Calu3 (cell line): ENCODE measurements at regions of chr10 and their contacts with region 1.

Region 1: DNA sequence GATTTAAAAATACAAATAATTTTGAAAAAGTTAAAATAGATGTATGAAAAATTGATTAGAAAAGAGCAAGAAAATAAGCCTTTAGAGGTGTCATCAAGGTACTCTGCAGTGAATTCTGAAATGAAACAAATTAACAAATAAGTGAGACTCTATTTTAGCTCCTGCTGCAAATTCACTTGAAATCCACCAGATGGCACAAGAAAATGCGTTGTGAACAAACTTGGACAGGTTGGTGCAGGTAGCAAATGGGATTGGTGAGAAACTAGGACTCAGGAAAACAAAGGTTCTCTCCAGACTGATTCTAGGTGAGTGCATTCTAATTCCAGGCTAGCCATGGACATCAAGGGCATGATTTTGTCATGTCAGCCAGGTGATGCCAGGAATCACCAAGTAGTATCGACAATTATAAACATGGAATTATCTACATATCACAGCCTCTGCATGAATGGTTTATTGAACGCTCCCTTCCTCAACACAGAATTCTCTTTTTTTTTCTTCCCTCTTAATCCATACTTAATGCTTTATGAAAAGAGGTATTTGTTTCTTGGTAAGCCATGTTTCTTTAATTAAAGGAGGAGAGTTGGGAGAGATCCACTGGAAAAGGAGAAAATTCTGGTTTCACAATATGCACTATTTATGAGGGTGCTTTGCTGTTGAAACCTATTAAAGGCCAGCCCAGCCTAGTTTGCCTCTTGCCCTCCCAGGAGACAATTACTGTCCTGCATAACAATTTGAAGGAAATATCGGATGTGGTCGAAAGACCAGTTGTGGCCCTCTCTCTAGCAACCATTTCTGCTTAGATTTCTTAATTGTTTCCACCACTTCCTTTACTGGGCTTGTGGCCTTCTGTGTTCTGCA is 118.1 kb downstream of the ZNF365 start:
- DNase-seq: peak; percentile 33
- H3K4me3 Mint-ChIP-seq: no peak overlapping the region
- H3K27ac Mint-ChIP-seq: no peak overlapping the region
- H3K4me1 Mint-ChIP-seq: no peaks in the 10 kb centered on the region
- H3K27me3 Mint-ChIP-seq: no peaks in the 10 kb centered on the region
- CTCF ChIP-seq: peak; percentile 57

Region 2: DNA sequence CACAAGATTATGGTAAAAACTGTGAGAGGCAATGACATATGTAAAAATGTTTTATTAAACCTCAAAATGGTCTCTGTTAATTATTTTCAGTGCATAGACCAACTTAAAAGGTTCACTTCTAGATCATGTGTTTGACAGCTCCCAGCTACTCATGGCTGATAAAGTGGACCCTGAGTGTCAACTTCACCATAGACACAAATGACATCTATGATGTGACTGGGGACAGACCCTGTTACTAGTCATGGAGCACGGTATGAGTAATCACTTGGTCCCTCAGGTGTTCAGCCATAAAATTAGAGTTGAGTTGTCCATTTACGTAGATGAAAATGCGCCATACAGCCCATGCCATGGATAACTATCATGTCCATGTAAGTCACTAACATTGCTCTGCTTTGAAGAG is 81.7 kb after region 1 on chr10:
- CTCF ChIA-PET with region 1: no interaction called
- intact Hi-C with region 1: loop called (anchors 5 kb)
- DNase-seq: no peak
- H3K4me3 Mint-ChIP-seq: no peak overlapping the region
- H3K27ac Mint-ChIP-seq: no peak overlapping the region
- H3K4me1 Mint-ChIP-seq: no peaks in the 10 kb centered on the region
- H3K27me3 Mint-ChIP-seq: peaks cover 32% of the 10 kb centered on the region
- CTCF ChIP-seq: no peak

Region 3: DNA sequence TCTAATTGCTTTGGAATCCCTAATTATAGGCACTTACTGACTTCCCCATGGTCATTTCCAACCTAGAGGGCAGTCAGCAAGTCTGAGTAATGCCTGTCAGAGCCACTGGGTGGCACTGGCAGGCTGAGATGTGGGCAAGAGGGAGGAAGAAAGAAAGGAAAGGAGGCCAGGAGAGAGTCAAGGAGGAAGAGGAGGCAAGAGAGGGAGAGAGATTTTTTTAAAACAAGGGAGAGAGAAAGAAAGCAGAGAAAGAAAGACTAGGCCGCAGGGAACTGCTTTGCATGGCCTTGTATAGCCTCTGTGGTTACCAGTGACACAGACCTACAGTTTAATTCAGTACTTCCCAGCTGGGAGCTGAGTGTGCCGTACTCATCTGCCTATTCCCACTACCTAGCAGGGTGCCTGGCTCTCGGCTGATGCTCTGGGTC is 101.9 kb after region 1 on chr10:
- CTCF ChIA-PET with region 1: no interaction called
- intact Hi-C with region 1: loop called (anchors 5 kb)
- DNase-seq: peak; percentile 77
- H3K4me3 Mint-ChIP-seq: no peak overlapping the region
- H3K27ac Mint-ChIP-seq: no peak overlapping the region
- H3K4me1 Mint-ChIP-seq: no peaks in the 10 kb centered on the region
- H3K27me3 Mint-ChIP-seq: no peaks in the 10 kb centered on the region
- CTCF ChIP-seq: peak; percentile 94